GM13977 (cell line): ENCODE measurements at regions of chr2 and their contacts with region 1.

Region 1: DNA sequence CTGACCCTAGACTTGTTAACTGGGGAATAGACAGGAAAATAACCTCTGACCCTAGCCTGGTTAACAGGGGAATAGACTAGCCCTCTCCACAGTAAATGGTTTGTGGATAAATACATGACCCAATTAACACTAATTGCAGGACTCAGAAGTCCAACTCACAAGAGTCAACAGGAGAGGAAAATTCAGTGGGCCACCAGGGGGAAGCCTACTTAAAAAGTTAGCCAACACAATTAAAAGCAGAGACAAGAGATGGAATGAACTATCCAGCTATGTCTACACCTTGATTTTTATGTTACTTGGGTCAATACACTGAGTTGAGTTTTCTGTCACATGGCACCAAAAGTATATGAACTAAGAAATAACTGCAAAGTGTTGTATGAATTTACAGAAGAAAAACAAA is 158.8 kb upstream of the SLC39A10 start:
- DNase-seq: no peak
- CTCF ChIP-seq: peak; percentile 51

Region 2: GRCh38 chr2:195382186-195382585 is 116.0 kb before region 1 on chr2:
- in situ Hi-C with region 1: no loop called
- DNase-seq: no peak
- CTCF ChIP-seq: no peak

Region 3: DNA sequence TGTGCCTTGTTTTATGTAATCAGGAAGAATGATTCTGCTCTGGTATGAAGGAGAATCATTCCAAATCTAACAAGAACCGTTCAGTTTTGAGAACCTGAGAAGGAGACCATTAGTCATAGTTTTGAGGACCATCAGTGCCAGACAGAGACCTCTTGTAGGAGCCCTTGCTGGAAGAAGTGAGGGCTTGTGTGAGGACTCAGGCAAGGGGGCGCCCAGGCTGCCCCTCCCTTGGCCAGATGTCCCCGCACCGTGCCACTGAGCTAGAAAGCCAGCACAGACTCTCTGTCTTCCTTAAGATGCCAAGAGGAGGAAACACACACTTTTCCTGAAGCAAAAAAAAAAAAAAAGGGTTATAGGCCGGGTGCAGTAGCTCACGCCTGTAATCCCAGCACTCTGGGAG is 103.2 kb after region 1 on chr2:
- in situ Hi-C with region 1: no loop called
- DNase-seq: no peak
- CTCF ChIP-seq: no peak

Region 4: GRCh38 chr2:196068271-196069209 is 570.4 kb after region 1 on chr2 and contains the start of gene DNAH7:
- in situ Hi-C with region 1: loop called (anchors 25 kb)
- DNase-seq: peak; percentile 85
- CTCF ChIP-seq: peak; percentile 94